ENCODE measurements at regions of chr1 and their contacts with region 1.

Region 1: DNA sequence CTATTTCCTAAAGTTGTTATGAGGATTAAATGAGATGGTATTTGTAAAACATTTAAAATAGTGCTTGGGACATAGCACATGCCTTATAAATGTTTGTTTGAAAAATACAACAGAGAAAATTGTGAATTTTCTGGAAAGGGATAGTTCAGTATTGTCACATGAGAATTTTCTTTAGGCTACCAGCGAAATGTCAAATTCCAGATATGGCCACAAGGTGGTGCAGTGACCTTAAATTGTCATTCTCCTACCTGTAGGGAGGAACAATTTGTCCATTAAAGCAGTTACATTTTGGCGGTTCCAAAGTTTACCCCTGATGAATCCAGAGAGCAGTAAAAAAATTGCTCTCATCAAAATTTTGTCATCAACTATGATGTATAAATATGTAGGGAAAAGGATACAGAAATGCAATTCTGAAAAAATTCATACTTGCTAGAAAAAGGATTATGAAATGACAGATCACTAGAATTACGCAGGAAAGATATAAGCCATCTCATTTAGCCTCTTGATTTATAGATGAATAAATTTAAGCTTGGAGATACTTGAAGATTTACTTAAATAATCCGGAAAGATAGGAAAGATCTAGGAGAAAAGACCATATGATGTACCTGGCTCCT is 50.2 kb upstream of the TSHB start:
- DNase-seq: peak; percentile 25 to 76
- H3K4me3 ChIP-seq: no peak overlapping the region
- H3K4me1 ChIP-seq: no peaks in the 10 kb centered on the region
- H3K27me3 ChIP-seq: peaks cover 7% of the 10 kb centered on the region

Region 2: DNA sequence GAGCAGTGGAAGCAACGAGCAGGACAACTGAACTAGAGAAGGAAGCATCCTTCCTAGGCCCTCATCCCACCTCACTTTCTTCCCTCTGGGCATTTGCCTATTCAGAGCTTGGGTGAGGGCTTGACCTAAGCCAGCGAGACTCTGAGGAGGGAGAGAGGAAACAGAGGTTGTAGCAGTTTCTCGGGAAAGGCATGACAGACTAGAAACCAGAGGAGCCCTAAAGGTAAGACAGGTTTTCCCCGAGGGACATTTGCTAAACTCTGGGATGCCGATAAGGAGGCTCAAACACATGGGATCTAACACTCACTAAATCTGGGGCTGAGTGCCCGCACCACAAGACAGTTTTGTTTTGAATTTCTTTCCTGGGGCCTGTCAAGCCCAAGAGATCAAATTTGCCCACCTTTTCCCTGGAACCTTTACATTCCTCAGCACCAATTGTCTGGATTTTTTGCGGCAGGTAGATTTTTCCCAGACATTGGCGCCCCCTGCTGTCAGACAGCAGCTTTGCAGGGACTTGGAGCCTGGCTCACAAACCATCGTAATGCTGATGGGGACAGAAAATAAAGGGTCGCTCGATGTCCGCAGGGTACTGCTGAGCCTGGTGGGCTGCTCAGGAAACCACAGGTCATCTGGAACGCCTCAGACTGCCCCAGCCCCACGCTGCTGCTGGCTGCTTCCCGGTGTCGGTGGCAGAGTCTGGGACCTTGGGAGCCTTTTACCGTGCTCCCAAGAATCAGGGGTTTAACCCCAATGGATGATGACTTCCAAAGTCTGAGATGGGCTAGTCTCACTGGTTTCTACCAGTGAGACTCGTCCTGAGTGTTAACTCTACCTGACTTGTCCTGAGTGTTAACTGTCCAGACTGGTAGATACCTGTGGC is 133.4 kb after region 1 on chr1:
- in situ Hi-C with region 1: loop called (anchors 10 kb)
- DNase-seq: peak; percentile 39 to 66
- H3K4me3 ChIP-seq: no peak overlapping the region
- H3K4me1 ChIP-seq: no peaks in the 10 kb centered on the region
- H3K27me3 ChIP-seq: no peaks in the 10 kb centered on the region; the same call in 1 of the 2 replicates

Region 3: DNA sequence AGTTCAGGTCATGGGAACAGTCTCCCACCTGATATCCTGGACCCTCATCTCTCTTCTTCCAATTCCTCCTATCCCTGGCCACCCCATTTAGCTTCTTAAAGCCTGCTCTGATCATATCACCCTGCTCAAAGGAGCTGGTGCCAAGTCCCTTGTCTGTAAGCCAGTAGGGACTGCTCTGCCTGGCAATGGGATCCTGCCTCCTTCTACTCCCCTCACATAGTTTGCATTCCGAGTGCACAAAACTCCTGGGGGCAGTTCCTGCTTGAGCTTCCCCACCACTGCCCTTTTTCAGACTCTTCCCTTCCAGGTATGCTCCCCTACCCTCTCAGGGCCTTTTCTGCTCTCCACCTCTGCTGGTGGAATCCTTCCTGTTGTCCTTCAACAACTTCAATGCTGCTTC is 310.6 kb after region 1 on chr1:
- in situ Hi-C with region 1: no loop called
- DNase-seq: no peak
- H3K4me3 ChIP-seq: no peak overlapping the region
- H3K4me1 ChIP-seq: no peaks in the 10 kb centered on the region
- H3K27me3 ChIP-seq: no peaks in the 10 kb centered on the region

Region 4: DNA sequence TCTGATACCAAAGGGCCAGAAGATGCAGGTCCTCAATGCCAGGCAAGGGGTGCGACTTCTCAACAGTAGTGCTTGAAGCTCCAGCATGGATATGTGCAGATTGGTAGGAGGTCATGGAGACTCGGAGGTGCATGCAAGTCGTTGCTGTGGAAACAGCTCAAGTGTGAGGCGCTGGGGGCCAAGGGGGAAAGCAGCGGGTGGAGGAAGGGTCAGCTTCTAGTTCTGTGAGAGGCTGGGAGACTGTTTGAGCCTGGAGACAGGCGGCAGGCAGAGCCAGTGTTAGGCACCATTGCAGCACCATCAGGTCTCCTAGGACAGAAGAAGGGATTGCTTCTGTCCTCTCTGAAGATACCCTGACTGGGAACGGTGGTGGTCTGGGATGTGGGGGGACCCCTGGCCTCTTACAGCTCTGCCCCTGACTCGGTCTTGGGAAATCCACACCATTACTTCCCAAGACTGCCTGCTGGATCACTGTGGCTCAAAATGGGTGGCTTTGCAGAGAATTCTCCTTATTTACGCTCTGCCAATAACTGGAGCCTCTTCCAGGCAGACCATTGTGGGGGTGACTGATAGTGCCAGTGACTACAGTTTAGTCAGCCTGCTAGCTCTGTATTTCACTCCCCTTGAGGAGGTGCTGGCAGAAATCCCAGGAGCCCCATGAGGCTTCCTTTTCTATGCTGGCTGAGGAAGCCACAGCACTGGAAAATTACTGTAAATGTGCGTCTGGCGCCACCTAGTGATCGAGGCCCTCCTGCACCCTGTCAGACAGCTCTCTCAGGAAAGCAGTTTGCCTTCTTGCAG is 616.1 kb after region 1 on chr1:
- in situ Hi-C with region 1: loop called (anchors 25 kb)
- DNase-seq: peak; percentile 56 to 88
- H3K4me3 ChIP-seq: no peak overlapping the region
- H3K4me1 ChIP-seq: no peaks in the 10 kb centered on the region
- H3K27me3 ChIP-seq: no peaks in the 10 kb centered on the region; the same call in 1 of the 2 replicates